GM10248 (cell line): ENCODE measurements at regions of chr15 and their contacts with region 1.

Region 1: DNA sequence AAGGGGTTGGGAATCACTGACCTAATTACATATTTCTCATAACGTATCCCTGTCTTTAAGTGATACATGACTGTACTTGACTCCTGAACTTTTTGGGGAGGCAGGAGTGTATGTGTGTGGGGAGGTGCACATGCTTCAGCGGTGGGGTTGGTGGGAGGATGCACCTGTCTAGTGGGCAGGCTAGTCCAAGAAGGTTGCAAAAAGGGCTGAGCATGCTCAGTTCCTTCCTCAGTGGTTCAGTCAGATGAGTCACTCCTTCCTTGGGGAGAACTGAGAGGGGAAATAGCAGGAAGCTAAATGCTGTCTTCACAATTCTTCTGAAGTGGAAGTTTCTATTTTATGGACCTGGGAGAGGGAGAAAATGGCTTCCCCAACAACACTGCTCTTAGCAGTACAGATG is 24.6 kb upstream of the AP4E1 start:
- DNase-seq: peak; percentile 20
- CTCF ChIP-seq: no peak

Region 2: DNA sequence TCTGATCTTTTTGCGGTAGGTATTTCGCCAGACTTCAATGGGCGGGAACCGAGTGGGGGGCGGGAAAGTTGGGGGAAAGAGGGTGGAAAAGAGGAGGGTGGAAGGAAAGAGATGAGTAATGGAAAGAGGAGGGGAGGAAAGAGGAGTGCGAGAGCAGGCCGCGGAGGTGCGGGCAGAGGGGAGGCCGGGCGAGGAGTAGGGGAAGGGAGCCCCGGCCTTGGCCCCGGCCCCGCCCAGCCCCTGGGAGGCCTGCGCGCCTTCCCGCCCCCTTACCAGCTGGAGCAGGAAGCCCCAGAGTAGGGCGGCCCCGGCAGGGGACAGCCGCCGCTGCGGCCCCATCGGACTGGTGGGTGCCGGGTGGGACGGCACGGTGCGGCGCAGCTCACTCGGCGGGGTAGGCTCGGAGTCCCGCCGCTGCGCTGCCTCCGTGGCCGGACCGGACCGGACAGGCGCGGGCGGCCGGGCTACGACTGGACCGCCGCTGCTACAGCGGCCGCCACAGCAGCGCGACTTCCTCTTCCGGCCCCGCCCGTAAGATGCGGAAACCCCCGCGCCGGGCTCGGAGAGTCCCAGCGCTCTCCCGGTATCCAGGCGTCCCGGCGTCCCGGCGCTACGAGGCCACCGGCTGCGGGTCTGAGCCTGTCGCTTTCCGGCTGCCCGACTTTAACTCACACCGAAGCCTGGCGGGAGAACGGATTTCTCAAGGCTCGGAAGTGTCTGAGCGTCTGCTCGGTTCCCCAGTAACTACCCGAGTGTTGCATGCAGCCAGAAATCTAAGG is 118.5 kb before region 1 on chr15 and contains the start of gene SPPL2A:
- CTCF ChIA-PET with region 1: interaction called, 10 read pairs
- POLR2A ChIA-PET with region 1: no interaction called
- DNase-seq: peak; percentile 95
- CTCF ChIP-seq: no peak

Region 3: GRCh38 chr15:50820808-50821382 is 63.0 kb before region 1 on chr15:
- CTCF ChIA-PET with region 1: no interaction called
- POLR2A ChIA-PET with region 1: no interaction called
- DNase-seq: no peak
- CTCF ChIP-seq: no peak

Region 4: DNA sequence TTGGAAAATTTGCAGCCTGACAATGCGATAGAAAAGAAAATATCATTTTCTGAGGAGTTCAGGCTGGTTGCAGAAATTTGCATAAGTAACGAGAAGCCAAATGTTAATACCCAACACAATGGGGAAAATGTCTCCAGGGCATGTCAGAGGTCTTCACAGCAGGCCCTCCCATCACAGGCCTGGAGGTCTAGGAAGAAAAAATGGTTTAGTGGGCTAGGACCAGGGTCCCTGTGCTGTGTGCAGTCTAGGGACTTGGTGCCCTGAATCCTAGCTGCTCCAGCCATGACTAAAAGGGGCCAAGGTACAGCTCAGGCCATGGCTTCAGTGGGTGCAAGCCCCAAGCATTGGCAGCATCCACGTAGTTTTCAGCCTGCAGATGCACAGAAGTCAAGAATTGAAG is 10.1 kb after region 1 on chr15:
- CTCF ChIA-PET with region 1: interaction called, 31 read pairs
- POLR2A ChIA-PET with region 1: no interaction called
- DNase-seq: no peak
- CTCF ChIP-seq: no peak

Region 5: DNA sequence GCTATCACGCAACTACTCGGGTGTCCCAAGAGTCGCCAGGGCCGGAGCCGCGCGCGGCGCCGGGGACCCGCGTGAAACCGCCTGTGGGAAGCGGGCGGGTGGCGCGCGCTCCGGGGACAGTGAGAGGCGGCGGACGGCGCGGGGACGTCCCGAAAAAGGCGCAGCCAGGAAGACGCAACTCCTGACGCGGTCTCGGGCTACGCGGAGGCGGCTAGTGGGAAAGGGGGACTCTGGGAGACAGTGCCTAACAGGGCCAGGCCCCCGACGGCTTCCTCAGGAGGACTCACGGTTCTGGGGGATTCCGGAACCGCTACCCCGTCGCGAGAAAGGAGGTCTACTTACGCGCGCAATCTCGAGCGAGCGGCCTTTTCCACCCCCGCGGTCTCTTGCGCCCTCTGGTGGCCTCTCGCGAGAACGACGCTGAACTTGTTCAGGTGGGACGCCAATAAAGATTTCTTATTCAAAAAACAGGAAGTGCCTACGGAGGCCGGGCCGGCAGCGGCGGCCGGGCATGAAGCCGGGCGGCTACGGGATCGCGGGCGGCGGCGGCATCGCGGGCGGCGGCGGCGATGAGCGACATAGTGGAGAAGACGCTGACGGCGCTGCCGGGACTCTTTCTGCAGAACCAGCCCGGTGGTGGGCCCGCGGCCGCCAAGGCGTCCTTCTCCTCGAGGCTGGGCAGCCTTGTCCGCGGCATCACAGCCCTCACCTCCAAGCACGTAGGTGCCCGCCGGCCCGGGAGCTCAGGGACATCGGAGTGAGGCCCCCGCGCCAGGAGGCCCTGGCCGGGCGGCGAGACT is 24.5 kb after region 1 on chr15 and contains the start of gene AP4E1:
- CTCF ChIA-PET with region 1: interaction called, 46 read pairs
- POLR2A ChIA-PET with region 1: interaction called, 4 read pairs
- DNase-seq: peak; percentile 87
- CTCF ChIP-seq: peak; percentile 90

Region 6: GRCh38 chr15:50933341-50933740 is 49.4 kb after region 1 on chr15:
- CTCF ChIA-PET with region 1: no interaction called
- POLR2A ChIA-PET with region 1: no interaction called
- DNase-seq: no peak
- CTCF ChIP-seq: no peak